ENCODE measurements at regions of chr12 and their contacts with region 1.

Region 1: GRCh38 chr12:2877047-2877952 is at the starts of genes FOXM1 and RHNO1:
- DNase-seq: peak; percentile 89
- H3K4me3 Mint-ChIP-seq: peak within 1 kb of the TSS; percentile 95
- H3K27ac Mint-ChIP-seq: peak within 1 kb of the TSS; percentile 94
- H3K4me1 Mint-ChIP-seq: peaks cover 30% of the 10 kb centered on the region
- H3K27me3 Mint-ChIP-seq: no peaks in the 10 kb centered on the region
- total RNA-seq, gene FOXM1: 74.6 to 80.5 TPM
- total RNA-seq, gene RHNO1: 64.6 to 68.1 TPM

Region 2: GRCh38 chr12:2682296-2683251 is 194.7 kb before region 1 on chr12:
- CTCF ChIA-PET with region 1: no interaction called
- intact Hi-C with region 1: no loop called
- DNase-seq: peak; percentile 71
- H3K4me3 Mint-ChIP-seq: no peak overlapping the region
- H3K27ac Mint-ChIP-seq: peak overlapping the region; percentile 3
- H3K4me1 Mint-ChIP-seq: peaks cover 5% of the 10 kb centered on the region
- H3K27me3 Mint-ChIP-seq: no peaks in the 10 kb centered on the region

Region 3: GRCh38 chr12:2794736-2795289 is 82.5 kb before region 1 on chr12 and contains the start of gene FKBP4:
- CTCF ChIA-PET with region 1: no interaction called
- intact Hi-C with region 1: loop called (anchors 5 kb)
- DNase-seq: peak; percentile 91
- H3K4me3 Mint-ChIP-seq: peak within 1 kb of the TSS; percentile 88
- H3K27ac Mint-ChIP-seq: peak within 1 kb of the TSS; percentile 68
- H3K4me1 Mint-ChIP-seq: peaks cover 26% of the 10 kb centered on the region
- H3K27me3 Mint-ChIP-seq: no peaks in the 10 kb centered on the region
- total RNA-seq, gene FKBP4: 139 TPM

Region 4: DNA sequence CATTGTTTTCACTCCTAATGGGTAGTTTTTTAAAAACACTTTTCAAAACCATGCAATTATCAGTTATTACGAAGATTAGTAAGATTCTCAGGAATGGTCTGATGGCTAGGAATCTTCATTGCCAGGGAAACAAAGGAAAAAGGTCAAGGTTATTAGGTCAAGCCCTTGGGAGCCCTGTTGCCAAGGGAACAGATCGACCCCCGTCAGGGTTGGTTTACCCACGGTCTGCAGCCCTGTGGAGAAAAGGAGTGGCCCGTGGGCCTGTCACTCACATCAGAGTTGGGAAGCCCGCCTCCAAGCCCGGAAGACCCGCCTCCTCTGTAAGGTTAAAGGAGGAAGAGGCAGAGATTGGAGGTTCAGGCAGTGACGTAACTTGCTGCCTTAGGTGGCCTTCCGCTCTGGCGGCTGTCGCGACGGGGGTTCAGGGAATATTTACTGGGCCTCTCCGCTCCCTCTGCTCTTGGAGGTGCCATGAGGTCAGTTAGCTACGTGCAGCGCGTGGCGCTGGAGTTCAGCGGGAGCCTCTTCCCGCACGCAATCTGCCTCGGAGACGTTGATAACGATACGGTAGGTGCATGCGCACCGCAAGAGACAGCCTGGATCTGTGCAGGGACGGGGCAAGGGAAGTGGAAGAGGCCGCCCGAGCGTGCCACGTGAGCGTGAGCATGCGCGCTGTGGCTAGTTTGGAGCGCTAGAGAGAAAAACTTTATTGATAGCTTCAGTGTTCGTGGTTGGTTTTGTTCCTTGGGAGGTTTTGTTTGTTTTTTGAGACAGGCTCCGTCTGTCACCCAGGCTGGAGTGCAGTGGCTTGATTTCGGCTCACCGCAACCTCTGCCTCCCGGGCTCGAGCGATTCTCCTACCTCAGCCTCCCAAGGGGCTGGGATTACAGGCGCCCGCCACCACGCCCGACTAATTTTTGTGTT is 64.7 kb before region 1 on chr12 and contains the start of gene ITFG2:
- CTCF ChIA-PET with region 1: no interaction called
- intact Hi-C with region 1: loop called (anchors 1 kb)
- DNase-seq: peak; percentile 98
- H3K4me3 Mint-ChIP-seq: peak within 1 kb of the TSS; percentile 99
- H3K27ac Mint-ChIP-seq: peak within 1 kb of the TSS; percentile 98
- H3K4me1 Mint-ChIP-seq: peaks cover 25% of the 10 kb centered on the region
- H3K27me3 Mint-ChIP-seq: no peaks in the 10 kb centered on the region
- total RNA-seq, gene ITFG2: 27.5 to 30.5 TPM

Region 5: DNA sequence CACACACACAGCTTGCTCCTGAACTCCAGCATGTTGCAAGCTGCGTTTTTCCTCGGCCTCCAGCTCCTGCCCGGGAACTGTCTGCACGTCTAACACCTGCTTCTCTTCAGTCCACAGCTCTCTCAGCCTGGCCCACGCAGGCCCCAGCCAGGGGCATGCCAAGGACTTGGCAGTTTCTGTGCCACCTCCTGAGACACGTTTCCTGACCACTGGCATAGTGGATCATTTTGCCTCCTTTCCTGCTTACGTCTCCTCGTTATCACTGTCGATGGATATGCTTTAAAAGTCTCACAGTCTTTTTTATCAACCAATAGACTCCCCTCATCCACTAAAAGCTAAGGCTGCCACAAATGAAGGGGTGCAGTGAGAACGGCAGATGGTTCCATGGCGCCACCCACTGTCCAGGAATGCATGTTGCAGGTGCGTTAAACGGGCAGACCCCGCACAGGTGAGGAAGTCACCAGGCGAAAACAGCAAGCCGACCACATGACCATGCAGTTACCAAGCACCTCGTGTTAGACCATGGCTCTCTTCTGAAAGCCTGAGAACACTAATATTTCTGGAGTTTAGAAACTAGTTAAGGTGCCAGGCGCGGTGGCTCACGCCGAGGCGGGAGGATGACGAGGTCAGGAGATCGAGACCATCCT is 67.2 kb after region 1 on chr12:
- CTCF ChIA-PET with region 1: interaction called, 12 read pairs
- intact Hi-C with region 1: no loop called
- DNase-seq: peak; percentile 77
- H3K4me3 Mint-ChIP-seq: peak overlapping the region; percentile 36
- H3K27ac Mint-ChIP-seq: no peak overlapping the region
- H3K4me1 Mint-ChIP-seq: peaks cover 2% of the 10 kb centered on the region
- H3K27me3 Mint-ChIP-seq: peaks cover 3% of the 10 kb centered on the region